ENCODE measurements at regions of chr7 and their contacts with region 1.

Region 1: DNA sequence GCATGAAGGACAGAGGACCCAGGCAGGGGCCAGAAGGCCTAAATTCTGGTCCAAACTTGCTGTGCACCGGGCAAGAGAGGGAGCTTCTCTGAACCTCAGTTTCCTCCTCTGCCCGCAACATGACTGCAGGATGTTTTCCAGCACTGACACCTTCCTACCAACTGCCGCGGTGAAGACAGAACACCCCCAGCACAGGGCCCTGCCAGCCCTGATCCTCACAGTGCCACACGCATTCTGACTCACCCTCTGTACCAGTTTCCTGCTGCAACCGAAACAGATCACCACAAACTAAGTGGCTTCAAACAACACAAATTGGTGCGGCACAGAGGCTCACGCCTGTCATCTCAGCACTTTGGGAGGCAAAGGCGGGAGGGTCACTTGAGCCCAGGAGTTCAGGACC is 18.1 kb downstream of the MAD1L1 start:
- ATAC-seq: no peak
- H3K4me3 ChIP-seq: no peak overlapping the region
- H3K27ac ChIP-seq: no peak overlapping the region
- H3K4me1 ChIP-seq: peaks cover 4 to 7% of the 10 kb centered on the region in 2 donors

Region 2: DNA sequence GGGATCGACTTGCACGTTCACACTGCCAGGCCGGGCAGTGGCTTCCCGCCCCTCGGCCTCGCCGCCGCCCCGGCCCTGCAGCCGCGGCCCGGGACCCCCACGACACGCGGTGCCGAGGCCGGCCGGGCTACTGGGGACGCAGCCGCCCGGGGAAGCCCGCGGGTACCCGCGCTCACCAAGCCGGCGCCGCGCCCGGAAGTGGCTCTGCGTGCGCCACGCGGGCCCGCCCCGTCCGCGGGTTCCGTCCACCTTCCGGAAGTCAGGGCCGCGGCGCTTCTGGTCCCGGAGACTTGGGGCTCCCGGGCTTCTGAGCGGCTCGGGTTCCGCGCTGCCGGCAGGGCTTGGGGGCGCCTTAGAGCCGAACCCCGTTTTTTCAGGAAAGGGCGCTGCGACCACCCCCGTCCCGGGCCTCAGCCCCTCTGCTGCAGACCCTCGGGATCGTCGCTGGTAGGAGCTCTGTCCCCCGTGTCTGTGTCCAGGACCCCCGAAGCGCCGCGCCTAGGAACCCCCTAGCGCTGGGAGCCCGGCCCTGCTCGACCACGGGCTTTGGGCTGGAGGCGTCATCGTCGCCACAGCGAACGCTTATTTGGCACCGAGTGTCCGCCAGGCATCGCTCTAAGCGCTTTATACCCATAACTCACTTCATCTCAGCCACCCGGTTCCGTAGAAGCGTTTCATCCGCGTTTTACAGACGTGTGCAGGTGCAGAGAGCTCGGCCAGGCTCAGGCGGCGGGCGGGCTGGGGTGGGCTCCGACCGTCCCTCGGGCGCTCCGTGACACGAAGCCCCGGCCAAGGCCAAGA is 644.6 kb before region 1 on chr7 and contains the start of gene PSMG3:
- in situ Hi-C with region 1: loop called in 3 of 9 experiments (anchors 10 to 25 kb)
- ATAC-seq: peak; percentile 53 to 95 (median 93)
- H3K4me3 ChIP-seq: peak within 1 kb of the TSS; percentile 73 to 95 (median 85)
- H3K27ac ChIP-seq: peak within 1 kb of the TSS; percentile 84 to 88
- H3K4me1 ChIP-seq: peaks cover 16% of the 10 kb centered on the region in 2 donors
- total RNA-seq, gene PSMG3: 24.0 to 52.8 (median 44.8) TPM

Region 3: DNA sequence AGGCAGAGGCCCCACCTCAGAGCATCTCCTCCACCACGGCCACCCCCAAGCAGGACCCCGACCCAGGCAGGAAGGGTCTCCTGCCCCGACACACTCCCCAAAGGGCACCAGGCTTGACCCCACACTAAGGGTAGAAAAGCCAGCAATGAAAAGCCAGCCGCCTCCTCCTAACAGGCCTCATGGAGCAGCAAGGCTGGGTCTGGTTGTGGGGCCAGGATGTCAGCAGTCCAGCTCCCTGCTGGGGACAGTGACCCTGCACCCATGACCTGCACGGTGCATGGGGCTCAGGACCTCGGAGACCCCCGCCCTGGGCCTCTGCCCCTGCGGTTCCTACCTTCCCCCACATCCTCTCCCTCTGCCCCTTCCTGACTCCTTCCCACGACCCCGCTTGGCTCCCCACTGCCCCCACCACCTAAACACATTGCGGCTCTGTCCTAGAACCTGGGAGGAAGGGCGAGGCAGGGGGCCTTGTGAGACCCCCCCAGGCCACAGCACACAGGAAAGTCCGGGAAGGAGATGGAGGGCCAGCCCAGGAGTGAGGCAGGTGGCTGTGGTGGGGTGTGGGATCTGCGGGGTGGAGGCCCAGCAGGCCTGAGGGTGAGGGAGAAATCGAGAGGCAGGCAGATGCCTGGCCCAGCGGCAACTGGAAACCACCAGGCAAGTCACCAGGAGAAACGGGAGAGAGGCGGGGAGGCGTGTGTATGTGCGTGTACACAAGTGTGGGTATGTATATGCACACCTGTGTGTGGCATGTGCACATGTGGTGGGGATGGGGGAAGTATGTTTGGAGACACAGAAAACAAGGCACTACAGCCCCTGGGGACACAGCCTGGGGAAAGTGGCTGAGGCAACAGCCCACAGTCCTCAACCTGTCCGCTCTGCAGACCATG is 211.8 kb before region 1 on chr7:
- in situ Hi-C with region 1: no loop called
- ATAC-seq: peak in 3 of 8 experiments; percentile 3 to 17 (median 13)
- H3K4me3 ChIP-seq: no peak overlapping the region
- H3K27ac ChIP-seq: no peak overlapping the region
- H3K4me1 ChIP-seq: peaks cover 7 to 17% of the 10 kb centered on the region in 2 donors